ENCODE measurements at regions of chr6 and their contacts with region 1.

Region 1: DNA sequence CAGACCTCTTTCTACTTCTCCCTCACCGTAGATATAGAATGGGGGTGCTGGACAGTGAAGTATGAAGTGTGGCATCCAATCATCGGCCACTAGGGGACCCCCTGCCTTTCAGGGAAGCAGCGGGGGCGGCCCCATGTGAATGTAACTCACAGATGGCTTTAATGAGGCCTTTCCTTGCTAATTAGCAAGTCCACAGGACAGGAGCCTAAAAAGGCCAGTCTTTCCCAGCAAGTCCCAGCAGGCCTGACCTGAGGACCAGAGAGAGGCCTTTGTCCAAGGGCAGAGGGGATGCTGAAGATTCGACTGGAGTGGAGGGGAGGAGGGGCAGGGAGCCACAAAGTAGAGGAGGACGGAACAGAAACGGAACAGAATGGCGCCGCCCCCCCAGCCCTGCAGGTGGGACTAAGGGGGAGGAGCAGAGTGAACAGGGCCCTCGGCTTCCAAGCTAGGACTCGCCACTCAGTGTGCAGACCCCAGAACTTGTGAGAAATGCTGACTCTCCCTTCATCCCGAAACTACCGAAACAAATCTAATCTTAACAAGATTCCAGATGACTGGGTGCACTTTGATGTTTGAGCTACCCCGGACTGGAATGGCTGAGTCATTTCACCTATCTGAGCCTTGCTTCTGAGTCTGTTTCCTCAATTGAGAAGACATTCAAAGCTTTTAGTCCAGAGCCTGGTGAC is 5.8 kb downstream of the C6orf132 start:
- DNase-seq: peak; percentile 86 to 92
- H3K4me3 ChIP-seq: peak overlapping the region in 3 of 4 experiments; percentile 6 to 44 (median 8); a peak in 4 of 8 replicates
- H3K27ac ChIP-seq: peak overlapping the region; percentile 88; the same call in 1 of the 2 replicates
- H3K4me1 ChIP-seq: peaks cover 28 to 65% (median 47%) of the 10 kb centered on the region in 4 experiments
- H3K27me3 ChIP-seq: no peaks in the 10 kb centered on the region
- CTCF ChIP-seq: peak in 2 of 3 experiments; percentile 38 to 61; a peak in 3 of 4 replicates
- EP300 ChIP-seq: peak in 1 of 2 experiments; percentile 90; a peak in 1 of 3 replicates
- POLR2A ChIP-seq: peak in 1 of 2 experiments; percentile 39; a peak in 1 of 3 replicates
- RAD21 ChIP-seq: peak; percentile 12 to 33; a peak in 3 of 4 replicates

Region 2: DNA sequence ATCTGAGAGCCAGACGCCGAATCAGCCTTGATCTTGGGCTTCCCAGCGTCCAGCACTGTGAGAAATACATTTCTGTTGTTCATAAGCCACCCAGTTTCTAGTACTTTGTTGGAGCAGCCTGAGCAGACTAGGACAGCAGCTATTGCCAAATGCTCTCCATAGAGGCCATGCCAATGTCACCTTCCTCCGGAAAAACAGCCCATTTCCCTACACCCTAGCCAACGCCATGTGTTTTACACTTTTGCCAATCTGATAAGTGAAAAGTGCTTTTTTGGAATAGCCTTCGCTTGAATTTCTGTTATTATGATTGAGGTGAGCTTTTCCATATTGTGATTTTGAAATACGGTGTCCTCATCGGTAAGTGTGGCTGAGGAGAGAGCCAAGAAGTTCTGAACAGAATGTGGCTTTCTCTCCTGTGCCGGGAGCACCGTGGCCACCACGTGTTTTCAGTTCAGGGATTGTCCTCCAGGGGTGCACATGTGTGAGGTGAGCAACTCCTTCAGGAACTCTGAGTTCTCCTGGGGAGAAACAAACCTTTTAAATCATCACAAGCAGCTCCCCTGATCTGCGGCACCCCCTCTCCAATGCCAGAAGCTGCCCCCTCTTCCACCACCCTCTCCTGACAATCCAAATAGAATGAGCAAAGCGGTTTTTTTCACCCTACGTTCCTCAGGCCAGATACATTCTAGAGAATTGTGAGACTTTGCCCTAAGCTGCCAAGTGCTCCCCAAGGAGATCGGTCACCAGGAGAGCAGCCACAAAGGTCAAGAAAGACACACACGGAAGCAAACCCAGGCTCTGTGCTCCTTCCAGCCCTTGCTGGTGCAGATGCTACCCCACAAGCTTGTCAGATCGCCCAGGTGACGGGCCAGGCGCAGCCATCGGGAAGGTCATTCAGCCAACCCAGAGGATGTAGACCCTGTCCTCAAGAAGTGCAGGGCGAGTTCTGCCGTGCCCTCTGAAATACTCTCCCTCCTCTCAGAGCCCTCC is 50.3 kb before region 1 on chr6:
- CTCF ChIA-PET with region 1: interaction called, 15 read pairs
- POLR2A ChIA-PET with region 1: no interaction called
- DNase-seq: no peak
- H3K4me3 ChIP-seq: no peak overlapping the region
- H3K27ac ChIP-seq: no peak overlapping the region
- H3K4me1 ChIP-seq: peaks cover 0 to 6% (median 0%) of the 10 kb centered on the region in 4 experiments; a peak in 1 of 7 replicates
- H3K27me3 ChIP-seq: peaks cover 0 to 7% (median under 1%) of the 10 kb centered on the region in 4 experiments; a peak in 4 of 7 replicates
- CTCF ChIP-seq: peak; percentile 45 to 63 (median 45); a peak in 3 of 4 replicates
- EP300 ChIP-seq: no peak
- POLR2A ChIP-seq: no peak
- RAD21 ChIP-seq: peak; percentile 14 to 38; a peak in 3 of 4 replicates

Region 3: DNA sequence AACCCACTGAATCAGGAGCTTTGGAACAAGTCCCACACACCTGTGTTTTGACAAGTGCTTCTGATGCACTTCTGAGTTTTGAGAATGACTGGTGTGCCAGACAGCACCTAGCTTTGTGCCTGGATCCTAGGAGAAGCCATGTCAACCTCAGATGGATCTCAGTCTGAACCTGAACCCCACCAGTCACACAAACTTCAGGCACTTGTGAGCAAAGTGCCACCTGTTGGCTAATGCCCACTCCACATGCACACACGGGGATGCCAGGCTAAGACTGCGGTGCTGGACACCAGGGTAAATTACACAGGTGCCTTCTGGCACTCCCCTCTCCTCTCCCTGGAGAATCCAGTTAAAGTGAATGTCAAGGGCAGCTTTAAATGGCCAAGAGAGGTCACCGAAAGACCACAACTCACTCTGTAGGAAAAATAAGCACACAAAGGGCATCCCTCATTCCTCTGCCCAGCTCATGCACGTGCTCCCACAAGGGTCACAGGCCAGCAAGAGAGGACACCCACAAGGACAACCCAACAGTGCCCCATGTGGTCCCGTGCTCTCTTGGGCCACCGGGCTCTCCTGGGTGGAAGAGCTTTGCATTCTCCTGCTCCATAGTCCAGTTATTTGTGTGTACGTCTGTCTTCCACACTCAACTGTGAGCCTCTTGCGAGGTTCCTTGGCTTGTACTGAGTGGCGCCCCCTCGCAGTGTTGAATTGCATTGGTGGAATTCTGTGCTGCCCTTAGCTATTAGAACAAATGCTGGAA is 40.7 kb before region 1 on chr6:
- CTCF ChIA-PET with region 1: interaction called, 34 read pairs
- POLR2A ChIA-PET with region 1: interaction called, 5 read pairs
- DNase-seq: peak in 1 of 2 experiments; percentile 64
- H3K4me3 ChIP-seq: no peak overlapping the region
- H3K27ac ChIP-seq: no peak overlapping the region
- H3K4me1 ChIP-seq: peaks cover 0 to 7% (median 5%) of the 10 kb centered on the region in 4 experiments; a peak in 4 of 7 replicates
- H3K27me3 ChIP-seq: peaks cover 0 to 41% (median 37%) of the 10 kb centered on the region in 4 experiments; a peak in 6 of 7 replicates
- CTCF ChIP-seq: peak; percentile 22 to 48 (median 48)
- EP300 ChIP-seq: no peak
- POLR2A ChIP-seq: no peak; a peak in 1 of 3 replicates
- RAD21 ChIP-seq: peak; percentile 36 to 46; a peak in 2 of 4 replicates

Region 4: DNA sequence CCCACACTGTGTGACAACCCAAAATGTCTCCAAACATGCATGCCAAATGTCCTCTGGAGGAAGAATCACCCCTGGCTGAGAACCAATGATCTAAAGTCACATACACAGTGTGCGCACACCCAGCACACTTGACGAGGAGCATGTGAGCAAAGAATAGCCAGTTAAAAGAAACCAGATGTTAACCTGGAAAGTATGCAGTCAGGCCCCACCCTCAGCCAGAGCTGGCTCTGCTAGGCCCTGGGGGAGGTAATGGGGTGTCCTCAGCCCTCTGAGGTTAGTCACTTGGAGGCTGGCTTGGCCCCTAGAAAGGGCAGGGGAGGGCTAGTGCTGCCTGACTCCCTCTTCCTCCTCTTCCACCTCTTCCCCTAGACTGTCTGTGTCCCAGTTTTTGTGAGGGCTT is 21.4 kb after region 1 on chr6:
- CTCF ChIA-PET with region 1: interaction called, 123 read pairs
- POLR2A ChIA-PET with region 1: interaction called, 109 read pairs
- DNase-seq: no peak
- H3K4me3 ChIP-seq: no peak overlapping the region
- H3K27ac ChIP-seq: no peak overlapping the region
- H3K4me1 ChIP-seq: peaks cover 0 to 14% (median 8%) of the 10 kb centered on the region in 4 experiments
- H3K27me3 ChIP-seq: peaks cover 0 to 3% (median 0%) of the 10 kb centered on the region in 4 experiments; a peak in 3 of 7 replicates
- CTCF ChIP-seq: no peak
- EP300 ChIP-seq: no peak
- POLR2A ChIP-seq: no peak
- RAD21 ChIP-seq: no peak

Region 5: DNA sequence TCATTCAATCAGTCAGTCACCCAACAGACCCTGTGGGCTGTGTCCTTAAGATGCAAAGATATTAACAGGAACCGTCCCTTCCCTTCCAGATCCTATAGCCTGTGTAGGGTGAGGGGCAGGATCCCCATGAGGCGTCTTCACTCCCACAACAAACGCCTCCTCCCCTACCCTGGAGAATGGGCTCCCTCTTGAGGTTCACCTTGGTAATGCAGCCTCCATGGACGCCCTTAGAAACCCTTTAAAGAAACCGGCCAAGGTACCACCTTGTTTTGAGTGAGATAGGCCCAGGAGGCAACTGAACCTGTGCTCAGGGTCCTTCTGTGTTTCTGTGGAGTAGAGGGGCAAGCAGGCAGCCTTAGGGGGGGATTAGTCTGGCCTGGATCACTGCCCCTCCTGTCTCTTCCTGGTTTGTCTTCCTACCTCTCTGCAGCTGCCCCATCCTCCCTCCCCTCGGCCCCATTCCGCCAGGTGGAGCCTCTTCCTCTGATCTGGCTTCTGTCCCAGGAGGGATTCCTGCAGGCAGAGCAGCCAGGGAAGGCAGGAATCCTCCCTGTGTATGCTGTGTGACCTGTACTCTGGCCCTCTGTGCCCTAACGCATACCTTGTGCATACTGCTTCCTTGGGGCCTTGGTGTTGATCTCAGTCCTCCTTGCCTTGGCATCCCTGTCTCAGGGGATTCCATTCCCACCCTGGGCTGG is 29.9 kb after region 1 on chr6:
- CTCF ChIA-PET with region 1: interaction called, 123 read pairs
- POLR2A ChIA-PET with region 1: interaction called, 109 read pairs
- DNase-seq: peak; percentile 77 to 97
- H3K4me3 ChIP-seq: no peak overlapping the region
- H3K27ac ChIP-seq: peak overlapping the region; percentile 48
- H3K4me1 ChIP-seq: peaks cover 7 to 22% (median 11%) of the 10 kb centered on the region in 4 experiments
- H3K27me3 ChIP-seq: no peaks in the 10 kb centered on the region; a peak in 1 of 7 replicates
- CTCF ChIP-seq: peak; percentile 80 to 93 (median 89)
- EP300 ChIP-seq: no peak
- POLR2A ChIP-seq: no peak
- RAD21 ChIP-seq: peak; percentile 91 to 93

Region 6: DNA sequence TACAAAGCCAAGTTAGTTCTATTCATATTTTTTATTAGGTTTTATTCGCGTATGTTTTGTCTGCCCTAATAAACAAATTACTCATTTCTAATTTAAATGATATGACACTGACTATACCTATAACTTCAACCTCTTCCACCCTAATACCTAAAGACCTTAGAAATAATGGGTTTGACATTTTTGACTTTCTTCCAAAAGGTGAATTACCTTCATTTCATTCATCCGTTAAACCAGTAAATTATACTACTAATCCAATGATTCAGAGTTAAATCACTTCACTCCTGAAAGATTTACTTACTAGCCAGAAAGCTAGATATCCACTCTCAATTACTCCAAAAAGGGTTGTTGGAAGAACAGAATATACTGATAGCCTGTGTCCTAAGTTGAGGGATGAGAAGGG is 75.8 kb after region 1 on chr6:
- CTCF ChIA-PET with region 1: interaction called, 19 read pairs
- POLR2A ChIA-PET with region 1: interaction called, 3 read pairs
- DNase-seq: no peak
- H3K4me3 ChIP-seq: no peak overlapping the region
- H3K27ac ChIP-seq: no peak overlapping the region
- H3K4me1 ChIP-seq: no peaks in the 10 kb centered on the region; a peak in 1 of 7 replicates
- H3K27me3 ChIP-seq: no peaks in the 10 kb centered on the region
- CTCF ChIP-seq: no peak
- EP300 ChIP-seq: no peak
- POLR2A ChIP-seq: no peak
- RAD21 ChIP-seq: no peak

Measured in H1 (cell line).